CD4-positive, alpha-beta T cell (primary cell): ENCODE measurements at regions of chrX and their contacts with region 1.

Region 1: DNA sequence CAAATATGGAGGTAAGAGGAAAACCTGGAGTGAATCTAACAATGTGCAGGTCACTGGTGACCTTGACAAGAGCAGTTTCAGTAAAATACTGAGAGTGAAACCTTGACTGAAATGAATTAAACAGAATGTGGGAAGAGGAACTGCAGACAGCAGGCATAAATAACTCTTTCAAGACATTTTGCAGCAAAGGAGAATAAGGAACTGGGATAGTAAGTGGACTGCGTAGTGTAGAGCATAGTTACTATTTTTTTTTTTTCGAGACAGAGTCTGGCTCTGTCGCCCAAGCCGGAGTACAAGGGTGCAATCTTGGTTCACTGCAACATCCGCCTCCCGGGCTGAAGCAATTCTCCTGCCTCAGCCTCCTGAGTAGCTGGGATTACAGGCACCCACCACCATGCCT is 24.0 kb downstream of the RBMX start:
- DNase-seq: no peak
- ATAC-seq: no peak
- H3K4me3 ChIP-seq: no peak overlapping the region
- H3K4me3 Mint-ChIP-seq: no peak overlapping the region
- H3K27ac ChIP-seq: no peak overlapping the region
- H3K27ac Mint-ChIP-seq: no peak overlapping the region
- H3K4me1 ChIP-seq: no peaks in the 10 kb centered on the region
- H3K4me1 Mint-ChIP-seq: peaks cover 17% of the 10 kb centered on the region
- H3K27me3 ChIP-seq: no peaks in the 10 kb centered on the region
- H3K27me3 Mint-ChIP-seq: no peaks in the 10 kb centered on the region
- CTCF ChIP-seq: no peak

Region 2: DNA sequence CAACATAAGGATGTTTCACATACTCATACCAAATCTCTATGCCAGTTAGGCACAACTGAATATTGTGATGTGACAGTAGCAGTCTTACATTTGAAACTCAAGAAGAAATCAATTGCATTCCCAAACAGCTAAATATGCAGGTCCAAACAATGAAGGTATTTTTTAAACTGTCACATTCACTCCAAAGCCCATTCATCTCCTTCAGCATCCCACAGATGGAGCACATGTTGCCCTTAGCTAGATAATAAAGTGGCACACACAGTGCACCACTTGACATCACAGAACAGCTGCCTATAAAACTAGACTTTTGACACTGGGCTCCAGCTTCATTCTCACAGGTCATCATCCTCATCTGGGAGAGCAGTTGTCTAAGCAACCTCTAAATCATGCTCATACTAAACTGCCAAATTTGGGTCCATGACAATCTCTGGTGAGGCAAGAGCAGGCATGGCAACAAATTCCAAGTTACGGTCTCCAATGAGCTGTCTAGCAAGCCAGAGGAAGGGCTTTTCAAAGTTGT is 49.6 kb before region 1 on chrX:
- CTCF ChIA-PET with region 1: no interaction called
- POLR2A ChIA-PET with region 1: no interaction called
- intact Hi-C with region 1: loop called in 1 of 2 experiments (anchors 5 kb)
- DNase-seq: no peak
- ATAC-seq: no peak
- H3K4me3 ChIP-seq: no peak overlapping the region
- H3K4me3 Mint-ChIP-seq: no peak overlapping the region
- H3K27ac ChIP-seq: no peak overlapping the region
- H3K27ac Mint-ChIP-seq: no peak overlapping the region
- H3K4me1 ChIP-seq: no peaks in the 10 kb centered on the region
- H3K4me1 Mint-ChIP-seq: peaks cover 8% of the 10 kb centered on the region
- H3K27me3 ChIP-seq: no peaks in the 10 kb centered on the region
- H3K27me3 Mint-ChIP-seq: no peaks in the 10 kb centered on the region
- CTCF ChIP-seq: no peak

Region 3: GRCh38 chrX:137823257-137823656 is 966.7 kb after region 1 on chrX:
- CTCF ChIA-PET with region 1: no interaction called
- POLR2A ChIA-PET with region 1: no interaction called
- intact Hi-C with region 1: no loop called
- DNase-seq: no peak
- ATAC-seq: no peak
- H3K4me3 ChIP-seq: no peak overlapping the region
- H3K4me3 Mint-ChIP-seq: no peak overlapping the region
- H3K27ac ChIP-seq: no peak overlapping the region
- H3K27ac Mint-ChIP-seq: no peak overlapping the region
- H3K4me1 ChIP-seq: no peaks in the 10 kb centered on the region
- H3K4me1 Mint-ChIP-seq: no peaks in the 10 kb centered on the region
- H3K27me3 ChIP-seq: no peaks in the 10 kb centered on the region
- H3K27me3 Mint-ChIP-seq: no peaks in the 10 kb centered on the region
- CTCF ChIP-seq: no peak